Heart left ventricle (tissue), 16 donors: ENCODE measurements at regions of chr16 and their contacts with region 1.

Region 1: DNA sequence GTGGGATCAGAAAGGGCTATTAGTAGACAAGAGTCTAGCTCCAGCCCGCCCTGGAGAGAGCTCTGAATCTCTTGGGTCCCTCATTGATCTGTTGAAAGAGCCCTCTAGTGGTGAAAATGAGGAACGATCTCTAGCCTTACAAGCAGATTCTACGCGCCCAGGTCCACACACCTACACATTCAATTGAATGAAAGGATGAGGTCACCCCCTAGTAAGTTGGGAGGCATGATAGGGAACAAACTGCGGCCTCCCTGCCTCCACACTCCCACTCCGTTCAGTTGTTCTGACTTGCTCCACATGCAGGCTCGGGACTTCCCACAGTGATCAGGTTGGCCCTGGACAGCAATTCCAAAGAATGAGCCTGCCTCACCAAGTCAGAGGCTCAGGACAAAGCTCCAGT is 2.9 kb upstream of the CACNG3 start:
- DNase-seq: peak in 1 of 5 donors; percentile 19
- ATAC-seq: peak in 3 of 4 donors; percentile 55 to 63 (median 62)
- H3K4me3 ChIP-seq: no peak overlapping the region
- H3K27ac ChIP-seq: no peak overlapping the region
- H3K4me1 ChIP-seq: no peaks in the 10 kb centered on the region
- H3K27me3 ChIP-seq: peaks cover 2 to 48% (median 40%) of the 10 kb centered on the region in 9 donors
- CTCF ChIP-seq: peak; percentile 49 to 71 (median 66)
- POLR2A ChIP-seq: no peak

Region 2: DNA sequence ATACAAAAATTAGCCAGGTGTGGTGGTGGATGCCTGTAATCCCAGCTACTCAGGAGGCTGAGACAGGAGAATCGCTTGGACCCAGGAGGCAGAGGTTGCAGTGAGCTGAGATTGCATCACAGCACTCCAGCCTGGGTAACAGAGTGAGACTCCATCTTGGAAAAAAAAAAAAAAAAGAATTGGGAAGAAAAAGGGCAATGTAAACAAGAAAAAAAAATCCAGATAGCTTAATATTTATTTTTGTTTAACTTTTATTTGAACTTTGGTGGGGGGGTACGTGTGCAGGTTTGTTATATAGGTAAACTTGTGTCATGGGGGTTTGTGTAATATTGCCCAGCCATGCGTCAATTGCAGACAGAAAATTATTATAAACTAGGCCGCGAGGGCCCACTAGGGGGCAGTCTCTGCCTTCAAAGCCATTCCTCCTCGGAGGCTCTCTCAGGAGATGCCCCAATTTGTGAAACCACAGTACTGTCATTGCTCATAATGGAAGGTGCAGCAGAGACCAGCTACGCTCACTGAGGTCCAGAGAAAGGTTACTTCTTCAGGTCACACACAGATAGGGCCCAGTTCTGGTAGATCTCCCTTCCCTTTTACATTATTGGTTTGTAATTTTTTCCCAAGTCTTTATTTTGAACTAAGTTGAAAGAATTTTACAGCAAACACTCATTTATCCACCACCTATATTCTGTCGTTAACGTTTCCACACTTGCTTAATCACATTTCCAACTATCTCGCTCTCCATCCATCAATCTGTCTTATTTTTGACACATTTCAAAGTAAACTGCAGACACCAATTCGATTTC is 211.2 kb before region 1 on chr16:
- intact Hi-C with region 1: loop called in 8 of 10 experiments (anchors 2 to 10 kb)
- DNase-seq: peak; percentile 18 to 71 (median 46)
- ATAC-seq: peak in 3 of 4 donors; percentile 59 to 62 (median 59)
- H3K4me3 ChIP-seq: no peak overlapping the region
- H3K27ac ChIP-seq: no peak overlapping the region
- H3K4me1 ChIP-seq: no peaks in the 10 kb centered on the region
- H3K27me3 ChIP-seq: peaks cover 0 to 22% (median 0%) of the 10 kb centered on the region in 9 donors
- CTCF ChIP-seq: peak; percentile 50 to 77 (median 70)
- POLR2A ChIP-seq: no peak

Region 3: DNA sequence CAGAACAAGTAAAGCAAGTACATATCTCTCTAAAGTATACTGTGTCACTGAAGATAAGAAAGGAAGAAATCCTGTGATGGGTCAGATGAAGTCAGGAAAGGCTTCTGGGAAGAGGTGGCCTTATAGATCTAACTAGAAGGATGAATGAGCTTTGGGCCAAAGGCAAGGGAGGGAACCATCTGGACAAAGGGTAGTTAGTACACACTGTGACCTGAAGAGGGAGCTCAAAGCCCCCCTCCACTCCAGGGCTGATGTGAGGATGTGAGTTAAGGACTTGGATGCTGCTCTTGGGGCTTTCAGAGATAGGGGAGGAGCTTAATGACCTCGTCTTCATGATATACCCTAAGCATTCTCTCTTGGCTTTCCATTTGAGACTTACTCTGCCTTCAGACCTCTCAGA is 182.3 kb before region 1 on chr16:
- intact Hi-C with region 1: loop called in 9 of 10 experiments (anchors 1 to 5 kb)
- DNase-seq: peak in 1 of 5 donors; percentile 24
- ATAC-seq: peak in 3 of 4 donors; percentile 45 to 75 (median 62)
- H3K4me3 ChIP-seq: no peak overlapping the region
- H3K27ac ChIP-seq: no peak overlapping the region
- H3K4me1 ChIP-seq: no peaks in the 10 kb centered on the region
- H3K27me3 ChIP-seq: no peaks in the 10 kb centered on the region
- CTCF ChIP-seq: peak in 11 of 12 donors; percentile 32 to 61 (median 50)
- POLR2A ChIP-seq: no peak

Region 4: DNA sequence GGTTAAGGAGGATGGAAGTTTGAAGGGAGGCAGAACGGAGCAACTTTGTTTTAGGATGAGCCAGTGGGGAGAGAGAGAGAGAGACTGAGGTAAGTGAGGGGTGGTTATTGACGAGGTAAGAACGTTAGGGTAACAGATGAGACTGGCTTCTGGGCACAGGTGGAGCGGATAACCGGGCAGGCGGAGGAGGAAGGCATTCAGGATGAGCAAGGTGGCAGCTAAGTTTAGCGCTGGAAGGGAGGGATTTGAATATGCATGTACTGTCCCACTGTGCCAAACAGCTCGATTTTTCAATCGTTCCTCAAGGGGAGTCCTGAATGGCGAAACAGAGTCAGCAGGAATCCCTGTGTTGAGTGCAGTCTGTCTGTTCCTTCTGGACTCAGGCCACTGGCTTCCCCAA is 38.7 kb after region 1 on chr16:
- intact Hi-C with region 1: no loop called
- DNase-seq: no peak
- ATAC-seq: no peak
- H3K4me3 ChIP-seq: no peak overlapping the region
- H3K27ac ChIP-seq: no peak overlapping the region
- H3K4me1 ChIP-seq: no peaks in the 10 kb centered on the region
- H3K27me3 ChIP-seq: peaks cover 0 to 23% (median 7%) of the 10 kb centered on the region in 9 donors
- CTCF ChIP-seq: no peak
- POLR2A ChIP-seq: no peak

Region 5: GRCh38 chr16:24499193-24499814 is 246.1 kb after region 1 on chr16:
- intact Hi-C with region 1: loop called in 4 of 10 experiments (anchors 5 to 10 kb)
- DNase-seq: no peak
- ATAC-seq: peak in 3 of 4 donors; percentile 38 to 48 (median 39)
- H3K4me3 ChIP-seq: no peak overlapping the region
- H3K27ac ChIP-seq: no peak overlapping the region
- H3K4me1 ChIP-seq: no peaks in the 10 kb centered on the region
- H3K27me3 ChIP-seq: peaks cover 0 to 20% (median 0%) of the 10 kb centered on the region in 9 donors
- CTCF ChIP-seq: peak in 7 of 12 donors; percentile 14 to 39 (median 34)
- POLR2A ChIP-seq: no peak